ENCODE measurements at regions of chr6 and their contacts with region 1.

Region 1: DNA sequence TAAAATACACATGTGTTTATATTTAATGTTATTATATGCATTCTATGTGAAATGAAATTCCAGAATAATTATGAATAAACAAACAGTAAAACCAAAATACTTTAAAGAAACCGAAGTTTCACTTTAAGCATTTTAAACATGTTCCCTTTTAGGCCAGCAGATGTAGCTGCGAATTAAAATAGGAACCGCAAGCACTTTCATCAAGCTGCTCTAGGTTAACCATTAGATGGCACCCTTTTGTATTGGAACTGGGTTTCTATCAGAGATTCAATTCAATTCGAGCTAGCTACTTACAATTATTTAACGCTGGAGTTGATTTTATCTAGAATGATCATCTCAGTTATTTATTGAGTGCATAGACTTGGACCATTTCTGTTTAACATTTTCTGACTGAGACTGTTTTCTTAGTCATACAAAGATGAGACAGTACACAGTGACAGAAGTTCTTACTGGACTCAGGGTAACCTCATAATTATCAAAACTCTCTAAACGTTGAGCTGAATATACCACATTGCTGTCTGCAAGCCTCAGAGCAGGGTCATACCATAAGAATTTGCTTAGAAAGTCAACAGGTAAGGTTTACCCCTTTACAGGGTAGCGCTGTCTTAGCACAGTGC is 8.5 kb downstream of the TMEM242 start:
- DNase-seq: peak in 7 of 9 donors; percentile 43 to 65 (median 52)
- ATAC-seq: peak; percentile 87
- H3K4me3 ChIP-seq: no peak overlapping the region
- H3K4me3 Mint-ChIP-seq: no peak overlapping the region
- H3K27ac ChIP-seq: no peak overlapping the region
- H3K27ac Mint-ChIP-seq: peak overlapping the region in 3 of 9 donors; percentile 16 to 48 (median 33)
- H3K4me1 ChIP-seq: no peaks in the 10 kb centered on the region
- H3K4me1 Mint-ChIP-seq: peaks cover 0 to 22% (median 6%) of the 10 kb centered on the region in 7 donors
- H3K27me3 ChIP-seq: no peaks in the 10 kb centered on the region
- H3K27me3 Mint-ChIP-seq: no peaks in the 10 kb centered on the region

Region 2: GRCh38 chr6:157332813-157333212 is 18.0 kb after region 1 on chr6:
- CTCF ChIA-PET with region 1: interaction called, 16 read pairs
- POLR2A ChIA-PET with region 1: no interaction called
- intact Hi-C with region 1: loop called (anchors 1 kb)
- DNase-seq: no peak
- ATAC-seq: no peak
- H3K4me3 ChIP-seq: no peak overlapping the region
- H3K4me3 Mint-ChIP-seq: no peak overlapping the region
- H3K27ac ChIP-seq: no peak overlapping the region
- H3K27ac Mint-ChIP-seq: no peak overlapping the region
- H3K4me1 ChIP-seq: no peaks in the 10 kb centered on the region
- H3K4me1 Mint-ChIP-seq: peaks cover 0 to 6% (median 0%) of the 10 kb centered on the region in 7 donors
- H3K27me3 ChIP-seq: no peaks in the 10 kb centered on the region
- H3K27me3 Mint-ChIP-seq: peaks cover 32 to 75% (median 41%) of the 10 kb centered on the region in 5 donors

Region 3: DNA sequence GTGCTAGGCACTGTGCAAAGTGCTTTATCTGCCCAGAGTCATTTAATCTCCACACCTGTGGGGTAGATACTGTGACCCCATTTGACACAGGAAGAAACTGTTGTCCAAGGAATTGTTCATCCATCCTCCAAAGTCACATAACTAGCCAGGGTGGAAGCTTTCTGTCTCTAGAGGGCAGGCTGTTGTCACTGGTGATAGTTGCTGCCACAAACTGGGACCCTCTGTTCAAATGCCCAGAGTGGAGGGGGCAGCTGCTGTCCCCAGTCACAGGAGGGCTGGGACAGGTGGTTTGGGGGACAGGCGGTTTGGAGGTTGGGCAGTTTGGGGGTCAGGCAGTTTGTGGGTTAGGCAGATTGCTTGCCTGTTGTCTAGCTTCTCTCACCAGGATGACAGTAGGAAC is 24.6 kb after region 1 on chr6:
- CTCF ChIA-PET with region 1: interaction called, 16 read pairs
- POLR2A ChIA-PET with region 1: no interaction called
- intact Hi-C with region 1: loop called (anchors 1 kb)
- DNase-seq: no peak
- ATAC-seq: no peak
- H3K4me3 ChIP-seq: no peak overlapping the region
- H3K4me3 Mint-ChIP-seq: no peak overlapping the region
- H3K27ac ChIP-seq: no peak overlapping the region
- H3K27ac Mint-ChIP-seq: no peak overlapping the region
- H3K4me1 ChIP-seq: no peaks in the 10 kb centered on the region
- H3K4me1 Mint-ChIP-seq: peaks cover 0 to 2% (median 0%) of the 10 kb centered on the region in 7 donors
- H3K27me3 ChIP-seq: no peaks in the 10 kb centered on the region
- H3K27me3 Mint-ChIP-seq: peaks cover 19 to 72% (median 24%) of the 10 kb centered on the region in 5 donors

Region 4: GRCh38 chr6:157597446-157598312 is 282.9 kb after region 1 on chr6:
- CTCF ChIA-PET with region 1: interaction called, 6 read pairs
- POLR2A ChIA-PET with region 1: no interaction called
- intact Hi-C with region 1: loop called (anchors 1 kb)
- DNase-seq: peak in 4 of 9 donors; percentile 8 to 27 (median 18)
- ATAC-seq: peak; percentile 56
- H3K4me3 ChIP-seq: no peak overlapping the region
- H3K4me3 Mint-ChIP-seq: no peak overlapping the region
- H3K27ac ChIP-seq: no peak overlapping the region
- H3K27ac Mint-ChIP-seq: no peak overlapping the region
- H3K4me1 ChIP-seq: no peaks in the 10 kb centered on the region
- H3K4me1 Mint-ChIP-seq: peaks cover 0 to 6% (median 0%) of the 10 kb centered on the region in 7 donors
- H3K27me3 ChIP-seq: no peaks in the 10 kb centered on the region
- H3K27me3 Mint-ChIP-seq: no peaks in the 10 kb centered on the region

Region 5: GRCh38 chr6:157667211-157668008 is 352.6 kb after region 1 on chr6:
- CTCF ChIA-PET with region 1: interaction called, 16 read pairs
- POLR2A ChIA-PET with region 1: interaction called, 3 read pairs
- intact Hi-C with region 1: loop called (anchors 1 kb)
- DNase-seq: peak in 8 of 9 donors; percentile 28 to 67 (median 54)
- ATAC-seq: peak; percentile 83
- H3K4me3 ChIP-seq: no peak overlapping the region
- H3K4me3 Mint-ChIP-seq: peak overlapping the region in 4 of 10 donors; percentile 1 to 35 (median 10)
- H3K27ac ChIP-seq: no peak overlapping the region
- H3K27ac Mint-ChIP-seq: peak overlapping the region in 7 of 9 donors; percentile 4 to 38 (median 19)
- H3K4me1 ChIP-seq: peaks cover 0 to 15% of the 10 kb centered on the region in 2 donors
- H3K4me1 Mint-ChIP-seq: peaks cover 7 to 31% (median 23%) of the 10 kb centered on the region in 7 donors
- H3K27me3 ChIP-seq: no peaks in the 10 kb centered on the region
- H3K27me3 Mint-ChIP-seq: peaks cover 0 to 6% (median 0%) of the 10 kb centered on the region in 5 donors

Region 6: GRCh38 chr6:157898169-157898568 is 583.4 kb after region 1 on chr6:
- CTCF ChIA-PET with region 1: no interaction called
- POLR2A ChIA-PET with region 1: no interaction called
- intact Hi-C with region 1: loop called in 1 of 2 experiments (anchors 10 kb)
- DNase-seq: peak in 7 of 9 donors; percentile 39 to 68 (median 48)
- ATAC-seq: peak; percentile 55
- H3K4me3 ChIP-seq: no peak overlapping the region
- H3K4me3 Mint-ChIP-seq: no peak overlapping the region
- H3K27ac ChIP-seq: no peak overlapping the region
- H3K27ac Mint-ChIP-seq: peak overlapping the region in 8 of 9 donors; percentile 6 to 92 (median 50)
- H3K4me1 ChIP-seq: peaks cover 0 to 12% of the 10 kb centered on the region in 2 donors
- H3K4me1 Mint-ChIP-seq: peaks cover 5 to 40% (median 26%) of the 10 kb centered on the region in 7 donors
- H3K27me3 ChIP-seq: no peaks in the 10 kb centered on the region
- H3K27me3 Mint-ChIP-seq: no peaks in the 10 kb centered on the region

Region 7: DNA sequence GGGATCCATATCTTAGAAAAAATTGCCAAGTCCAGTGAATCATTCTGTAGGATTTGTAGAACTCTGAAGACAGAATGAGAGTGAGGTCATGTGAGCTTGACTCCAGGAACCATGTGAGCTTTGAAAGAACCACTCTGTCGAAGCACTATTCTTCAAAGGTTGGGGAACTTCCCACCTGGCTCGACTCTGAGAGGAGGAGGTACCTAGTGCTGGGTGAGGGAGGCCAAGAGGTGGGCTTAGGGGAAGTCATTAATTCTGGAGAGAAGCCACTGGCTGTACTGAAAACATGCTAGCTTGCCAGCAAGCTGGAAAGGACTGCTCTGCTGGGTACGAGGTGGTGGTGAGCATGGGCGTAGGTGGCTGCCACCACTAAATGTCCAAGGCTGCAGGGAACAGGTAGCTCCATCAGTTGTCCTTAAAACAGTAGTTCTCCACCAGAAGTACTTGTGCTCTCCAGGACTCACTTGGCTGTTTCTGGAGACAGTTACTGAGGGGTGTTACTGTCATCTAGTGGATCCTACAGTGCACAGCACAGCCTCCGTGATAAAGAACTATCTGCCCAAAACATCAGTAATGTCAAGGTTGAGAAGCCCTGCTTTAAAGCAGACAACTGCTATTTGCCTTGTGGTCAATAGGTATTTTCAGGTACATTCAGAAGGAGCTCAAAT is 632.2 kb after region 1 on chr6:
- CTCF ChIA-PET with region 1: no interaction called
- POLR2A ChIA-PET with region 1: no interaction called
- intact Hi-C with region 1: loop called (anchors 1 to 10 kb)
- DNase-seq: peak in 6 of 9 donors; percentile 11 to 51 (median 32)
- ATAC-seq: peak; percentile 72
- H3K4me3 ChIP-seq: no peak overlapping the region
- H3K4me3 Mint-ChIP-seq: peak overlapping the region in 1 of 10 donors; percentile 42
- H3K27ac ChIP-seq: no peak overlapping the region
- H3K27ac Mint-ChIP-seq: peak overlapping the region in 8 of 9 donors; percentile 8 to 88 (median 52)
- H3K4me1 ChIP-seq: no peaks in the 10 kb centered on the region
- H3K4me1 Mint-ChIP-seq: peaks cover 0 to 24% (median 5%) of the 10 kb centered on the region in 7 donors
- H3K27me3 ChIP-seq: no peaks in the 10 kb centered on the region
- H3K27me3 Mint-ChIP-seq: peaks cover 0 to 20% (median 0%) of the 10 kb centered on the region in 5 donors